MCF 10A (cell line): ENCODE measurements at regions of chr6 and their contacts with region 1.

Region 1: DNA sequence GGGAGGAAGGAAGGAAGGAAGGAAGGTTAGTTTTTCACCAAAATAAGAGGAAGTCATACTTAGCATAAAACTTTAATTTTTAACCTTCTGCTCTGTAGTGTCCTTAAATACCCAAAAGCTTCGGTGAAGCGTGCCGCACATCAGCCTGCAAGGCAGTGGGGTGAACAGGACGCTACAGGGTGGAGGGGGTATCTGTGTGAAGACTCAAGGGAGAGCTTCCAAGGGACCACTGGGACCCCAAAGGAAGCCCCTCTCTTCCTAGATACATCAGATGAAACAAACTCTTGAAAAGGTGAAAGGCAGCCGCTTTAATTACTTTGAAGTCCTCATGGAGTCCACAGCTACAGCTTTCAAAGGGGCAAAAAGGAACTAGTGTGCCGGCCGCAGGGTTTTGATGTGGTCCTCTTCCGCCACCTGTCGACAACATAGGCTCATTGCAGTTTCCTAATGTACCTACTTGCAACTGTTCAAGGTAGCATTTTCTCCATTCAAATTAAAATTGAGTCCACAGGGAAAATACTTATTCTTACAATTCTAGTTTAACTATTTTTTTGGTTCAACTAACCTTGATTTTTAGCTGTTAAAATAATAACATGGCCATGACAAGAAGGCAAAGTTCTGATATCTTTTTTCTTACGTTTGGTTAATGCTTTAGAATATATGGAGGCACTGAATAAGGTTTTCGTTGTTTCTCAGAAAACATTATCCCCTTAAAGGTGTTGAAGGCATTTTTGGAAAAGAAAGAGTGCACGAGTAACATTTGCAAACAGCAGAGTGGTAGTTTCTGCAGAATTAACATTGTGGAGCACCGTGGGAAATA is 135.0 kb upstream of the RIPOR2 start:
- DNase-seq: peak; percentile 86
- H3K4me3 Mint-ChIP-seq: no peak overlapping the region
- H3K27ac Mint-ChIP-seq: no peak overlapping the region
- H3K4me1 Mint-ChIP-seq: no peaks in the 10 kb centered on the region
- H3K27me3 Mint-ChIP-seq: no peaks in the 10 kb centered on the region
- CTCF ChIP-seq: peak; percentile 91

Region 2: GRCh38 chr6:25081563-25081962 is 10.8 kb after region 1 on chr6:
- CTCF ChIA-PET with region 1: interaction called, 10 read pairs
- POLR2A ChIA-PET with region 1: no interaction called
- intact Hi-C with region 1: no loop called
- DNase-seq: no peak
- H3K4me3 Mint-ChIP-seq: no peak overlapping the region
- H3K27ac Mint-ChIP-seq: no peak overlapping the region
- H3K4me1 Mint-ChIP-seq: no peaks in the 10 kb centered on the region
- H3K27me3 Mint-ChIP-seq: no peaks in the 10 kb centered on the region
- CTCF ChIP-seq: no peak

Region 3: DNA sequence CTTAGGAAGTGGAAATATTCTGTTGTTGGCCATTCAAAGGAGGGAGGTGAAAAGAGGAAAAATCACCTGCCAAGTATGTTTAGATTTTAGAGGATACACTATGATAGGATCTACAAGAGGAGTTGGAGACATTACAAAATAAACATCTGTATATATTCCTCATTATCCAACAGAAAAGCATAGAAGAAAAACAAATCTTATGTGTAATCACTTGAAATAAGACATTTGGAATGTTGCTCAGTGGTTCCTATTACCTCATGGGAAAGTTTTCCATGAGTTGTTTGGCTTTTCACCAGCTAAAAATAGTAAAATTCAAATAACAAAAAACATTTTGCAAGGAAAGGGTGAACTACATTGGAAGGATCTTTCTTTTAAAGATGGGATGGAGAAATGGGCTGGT is 131.7 kb after region 1 on chr6:
- CTCF ChIA-PET with region 1: no interaction called
- POLR2A ChIA-PET with region 1: no interaction called
- intact Hi-C with region 1: no loop called
- DNase-seq: peak; percentile 61
- H3K4me3 Mint-ChIP-seq: no peak overlapping the region
- H3K27ac Mint-ChIP-seq: peak overlapping the region; percentile 1
- H3K4me1 Mint-ChIP-seq: peaks cover 6% of the 10 kb centered on the region
- H3K27me3 Mint-ChIP-seq: no peaks in the 10 kb centered on the region
- CTCF ChIP-seq: no peak